ENCODE measurements at regions of chr15 and their contacts with region 1.

Region 1: DNA sequence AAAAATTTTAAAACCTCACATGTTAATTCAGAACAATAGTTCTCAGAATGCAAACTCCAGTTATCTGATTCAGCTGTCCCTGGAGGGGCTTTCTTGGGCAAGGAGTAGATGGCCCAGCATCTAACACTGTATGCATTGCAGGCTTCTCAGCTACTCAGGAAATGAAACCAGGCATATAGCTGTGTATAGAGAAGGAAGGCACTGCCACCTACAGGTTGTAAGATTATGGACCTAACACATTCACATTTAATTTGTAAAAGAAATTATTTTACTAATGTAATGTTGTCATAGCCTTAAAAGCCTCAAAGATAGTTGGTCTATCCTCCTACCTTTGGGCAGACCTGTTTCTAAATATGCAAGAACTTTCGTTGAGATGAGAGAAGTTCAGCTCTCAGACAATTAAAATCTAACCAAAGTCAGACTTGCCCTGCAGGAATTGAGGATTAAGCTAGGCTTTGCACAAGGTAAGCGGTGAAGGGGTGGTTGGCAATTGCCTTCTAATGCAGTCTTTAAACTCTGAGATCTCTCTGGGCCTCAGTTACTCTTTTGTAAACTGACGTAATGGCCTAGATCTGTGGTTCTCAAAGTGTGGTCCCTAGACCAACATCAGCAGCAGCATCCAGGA is 132.8 kb upstream of the SLC24A5 start:
- DNase-seq: peak; percentile 29
- H3K4me3 ChIP-seq: no peak overlapping the region
- H3K27ac ChIP-seq: no peak overlapping the region
- H3K27me3 ChIP-seq: no peaks in the 10 kb centered on the region
- CTCF ChIP-seq: peak; percentile 74

Region 2: GRCh38 chr15:47188758-47189507 is 799.1 kb before region 1 on chr15:
- CTCF ChIA-PET with region 1: interaction called, 227 read pairs
- POLR2A ChIA-PET with region 1: no interaction called
- DNase-seq: no peak
- H3K4me3 ChIP-seq: no peak overlapping the region
- H3K27ac ChIP-seq: no peak overlapping the region
- H3K27me3 ChIP-seq: peaks cover 20% of the 10 kb centered on the region
- CTCF ChIP-seq: no peak

Region 3: DNA sequence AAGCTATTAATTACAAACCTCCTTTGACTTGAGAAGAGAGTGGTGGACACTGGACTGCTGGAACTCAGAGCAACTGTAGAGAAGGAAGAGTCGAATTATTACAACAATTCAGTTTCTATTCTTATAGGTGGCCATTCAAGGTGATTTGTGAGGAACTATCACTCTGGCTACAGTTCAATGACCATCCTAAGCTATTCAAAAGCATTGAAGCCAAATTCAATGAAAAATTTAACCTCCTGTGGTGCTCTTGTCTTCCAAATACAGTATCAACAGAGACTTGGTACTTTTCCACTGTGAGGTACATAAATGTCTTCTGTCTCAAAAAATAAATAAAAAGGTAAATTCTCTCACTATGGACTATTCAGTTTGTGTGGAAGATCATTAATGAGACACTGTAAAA is 784.0 kb before region 1 on chr15:
- CTCF ChIA-PET with region 1: interaction called, 11 read pairs
- POLR2A ChIA-PET with region 1: no interaction called
- DNase-seq: no peak
- H3K4me3 ChIP-seq: no peak overlapping the region
- H3K27ac ChIP-seq: no peak overlapping the region
- H3K27me3 ChIP-seq: no peaks in the 10 kb centered on the region
- CTCF ChIP-seq: no peak

Region 4: GRCh38 chr15:47711654-47712053 is 276.4 kb before region 1 on chr15:
- CTCF ChIA-PET with region 1: interaction called, 24 read pairs
- POLR2A ChIA-PET with region 1: no interaction called
- DNase-seq: no peak
- H3K4me3 ChIP-seq: no peak overlapping the region
- H3K27ac ChIP-seq: no peak overlapping the region
- H3K27me3 ChIP-seq: no peaks in the 10 kb centered on the region
- CTCF ChIP-seq: peak; percentile 64